Dorsolateral prefrontal cortex (tissue), 120 donors: ENCODE measurements at regions of chr6 and their contacts with region 1.

Region 1: GRCh38 chr6:114284281-114284680 is 58.5 kb downstream of the HS3ST5 start:
- DNase-seq: no peak
- H3K4me3 ChIP-seq: no peak overlapping the region
- H3K27ac ChIP-seq: peak overlapping the region in 17 of 59 donors; percentile 1 to 66 (median 24)
- H3K27me3 ChIP-seq: no peaks in the 10 kb centered on the region
- CTCF ChIP-seq: no peak

Region 2: GRCh38 chr6:114119056-114119455 is 165.2 kb before region 1 on chr6:
- intact Hi-C with region 1: loop called in 1 of 2 experiments (anchors 10 kb)
- DNase-seq: no peak
- H3K4me3 ChIP-seq: no peak overlapping the region
- H3K27ac ChIP-seq: peak overlapping the region in 1 of 59 donors; percentile 49
- H3K27me3 ChIP-seq: no peaks in the 10 kb centered on the region
- CTCF ChIP-seq: no peak

Region 3: GRCh38 chr6:114144887-114145851 is 139.1 kb before region 1 on chr6:
- intact Hi-C with region 1: no loop called
- DNase-seq: no peak
- H3K4me3 ChIP-seq: no peak overlapping the region
- H3K27ac ChIP-seq: peak overlapping the region in 1 of 59 donors; percentile 49
- H3K27me3 ChIP-seq: no peaks in the 10 kb centered on the region
- CTCF ChIP-seq: no peak

Region 4: DNA sequence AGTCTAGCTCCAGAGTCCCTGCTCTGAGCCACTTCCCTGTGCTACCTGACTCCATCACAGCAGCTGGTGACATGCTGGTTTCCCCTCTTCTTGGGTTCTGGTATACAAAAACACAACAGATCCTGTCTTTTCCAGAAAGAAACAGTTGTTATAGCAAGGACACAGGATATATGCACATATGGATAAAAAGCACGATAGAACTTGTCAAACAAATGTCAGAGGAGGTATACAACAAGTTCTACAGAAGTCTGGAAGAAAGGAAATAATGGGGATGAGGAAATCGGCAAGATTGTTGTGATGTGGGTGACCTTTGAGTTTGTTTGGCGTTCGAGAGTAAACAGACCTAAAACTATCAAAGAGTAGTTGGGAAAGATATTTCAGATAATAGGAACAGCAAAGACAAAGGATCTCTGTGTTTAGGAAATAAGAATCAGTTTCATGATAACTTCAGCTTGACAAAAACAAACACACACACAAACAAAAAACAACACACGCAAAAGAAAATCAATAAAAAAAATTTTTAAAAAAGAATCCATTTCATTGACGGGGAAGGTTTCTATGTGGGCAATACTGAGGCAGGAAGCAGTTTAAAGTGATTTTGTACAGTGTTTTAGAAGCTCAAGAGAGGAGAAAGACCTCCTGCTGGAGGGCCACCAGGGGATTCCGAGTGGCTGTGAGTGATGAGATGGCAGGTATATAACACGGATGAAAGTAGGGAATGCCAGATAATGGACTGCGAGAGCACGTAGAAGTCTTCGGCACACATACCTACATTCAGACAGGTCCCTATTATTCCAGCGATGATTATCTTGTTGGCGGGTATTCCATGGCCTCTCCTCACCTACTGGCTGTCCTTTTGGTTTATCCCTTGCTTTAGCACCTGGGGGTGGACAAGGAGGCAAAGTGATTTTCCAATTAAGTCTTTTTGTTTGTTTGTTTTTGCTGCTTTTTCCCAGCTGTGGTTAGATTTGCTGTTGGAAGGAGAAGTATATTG is 116.4 kb before region 1 on chr6:
- intact Hi-C with region 1: loop called in 1 of 2 experiments (anchors 10 kb)
- DNase-seq: no peak
- H3K4me3 ChIP-seq: peak overlapping the region in 2 of 59 donors; percentile 1 to 15
- H3K27ac ChIP-seq: peak overlapping the region in 27 of 59 donors; percentile 0 to 71 (median 21)
- H3K27me3 ChIP-seq: no peaks in the 10 kb centered on the region
- CTCF ChIP-seq: no peak